ENCODE measurements at regions of chr9 and their contacts with region 1.

Region 1: GRCh38 chr9:20622330-20623020 is at the start of gene MLLT3:
- DNase-seq: peak; percentile 99
- total RNA-seq, gene MLLT3: 6.5 to 7.6 TPM

Region 2: GRCh38 chr9:20941174-20941690 is 318.8 kb after region 1 on chr9:
- intact Hi-C with region 1: loop called in 1 of 2 experiments (anchors 10 kb)
- DNase-seq: no peak